CD4-positive, alpha-beta memory T cell (primary cell): ENCODE measurements at regions of chr1 and their contacts with region 1.

Region 1: GRCh38 chr1:197902454-197903195 is at the start of gene C1orf53:
- DNase-seq: peak; percentile 71 to 85 (median 76)
- H3K4me3 ChIP-seq: peak within 1 kb of the TSS; percentile 26 to 75
- H3K4me3 Mint-ChIP-seq: peak within 1 kb of the TSS; percentile 87 to 93 (median 90)
- H3K27ac ChIP-seq: peak within 1 kb of the TSS; percentile 44
- H3K27ac Mint-ChIP-seq: peak within 1 kb of the TSS; percentile 30 to 85 (median 82)
- H3K4me1 ChIP-seq: peaks cover 15% of the 10 kb centered on the region
- H3K4me1 Mint-ChIP-seq: peaks cover 2 to 18% (median 12%) of the 10 kb centered on the region in 4 donors
- H3K27me3 ChIP-seq: peaks cover 43% of the 10 kb centered on the region
- H3K27me3 Mint-ChIP-seq: peaks cover 28 to 48% of the 10 kb centered on the region in 2 donors
- total RNA-seq, gene C1orf53: not detected

Region 2: GRCh38 chr1:197915862-197916499 is 13.4 kb after region 1 on chr1:
- CTCF ChIA-PET with region 1: interaction called, 8 read pairs
- POLR2A ChIA-PET with region 1: interaction called, 14 read pairs
- intact Hi-C with region 1: loop called (anchors 2 kb)
- DNase-seq: peak in 2 of 5 donors; percentile 18 to 30
- H3K4me3 ChIP-seq: peak overlapping the region in 1 of 2 donors; percentile 5
- H3K4me3 Mint-ChIP-seq: peak overlapping the region in 6 of 8 donors; percentile 17 to 89 (median 58)
- H3K27ac ChIP-seq: no peak overlapping the region
- H3K27ac Mint-ChIP-seq: peak overlapping the region in 1 of 7 donors; percentile 90
- H3K4me1 ChIP-seq: peaks cover 88% of the 10 kb centered on the region
- H3K4me1 Mint-ChIP-seq: peaks cover 52 to 98% (median 71%) of the 10 kb centered on the region in 4 donors
- H3K27me3 ChIP-seq: peaks cover 97% of the 10 kb centered on the region
- H3K27me3 Mint-ChIP-seq: peaks cover 82 to 90% of the 10 kb centered on the region in 2 donors

Region 3: DNA sequence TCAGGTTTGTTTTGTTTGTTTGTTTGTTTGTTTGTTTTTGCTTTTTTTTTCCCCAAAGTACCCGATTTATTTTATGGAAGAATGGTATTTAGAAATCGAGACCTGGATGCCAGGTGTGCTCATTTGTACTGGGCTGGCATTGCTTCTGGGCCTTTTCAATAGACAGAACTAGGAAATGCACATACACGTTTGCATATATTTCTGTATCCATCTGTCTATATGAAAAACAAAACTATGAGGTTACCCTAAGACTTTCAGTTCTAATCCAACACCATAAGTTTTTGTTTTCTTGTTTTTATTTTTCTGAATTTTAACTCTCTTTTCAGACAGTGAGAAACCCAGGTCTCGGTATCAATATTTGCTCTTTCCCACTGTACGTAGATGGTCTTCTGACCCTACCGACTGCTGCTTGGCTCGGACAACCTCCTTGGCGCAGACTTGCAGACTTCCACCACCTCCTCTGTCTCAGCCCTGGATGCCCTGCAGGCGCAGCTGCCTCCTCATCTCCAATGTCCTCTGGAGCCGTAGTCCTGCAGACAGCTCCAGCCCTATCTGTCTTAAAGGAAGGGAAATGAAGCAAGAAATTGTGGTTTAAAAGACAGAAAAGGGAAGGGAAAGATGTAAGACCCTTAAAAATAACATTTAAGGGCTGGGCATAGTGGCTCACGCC is 426.0 kb after region 1 on chr1:
- CTCF ChIA-PET with region 1: no interaction called
- POLR2A ChIA-PET with region 1: no interaction called
- intact Hi-C with region 1: no loop called
- DNase-seq: no peak
- H3K4me3 ChIP-seq: no peak overlapping the region
- H3K4me3 Mint-ChIP-seq: no peak overlapping the region
- H3K27ac ChIP-seq: no peak overlapping the region
- H3K27ac Mint-ChIP-seq: no peak overlapping the region
- H3K4me1 ChIP-seq: no peaks in the 10 kb centered on the region
- H3K4me1 Mint-ChIP-seq: peaks cover 0 to 6% (median 2%) of the 10 kb centered on the region in 4 donors
- H3K27me3 ChIP-seq: no peaks in the 10 kb centered on the region
- H3K27me3 Mint-ChIP-seq: peaks cover 2% of the 10 kb centered on the region in 2 donors